ENCODE measurements at regions of chr5 and their contacts with region 1.

Region 1: GRCh38 chr5:99169309-99169708 is 240.5 kb upstream of the CHD1 start:
- DNase-seq: no peak
- H3K4me3 ChIP-seq: no peak overlapping the region
- H3K27ac ChIP-seq: no peak overlapping the region
- H3K4me1 ChIP-seq: no peaks in the 10 kb centered on the region
- H3K27me3 ChIP-seq: no peaks in the 10 kb centered on the region
- CTCF ChIP-seq: peak in 1 of 3 experiments; percentile 19

Region 2: GRCh38 chr5:99272576-99272975 is 103.3 kb after region 1 on chr5:
- dilution Hi-C with region 1: loop called (anchors 25 kb)
- DNase-seq: no peak
- H3K4me3 ChIP-seq: no peak overlapping the region
- H3K27ac ChIP-seq: no peak overlapping the region
- H3K4me1 ChIP-seq: no peaks in the 10 kb centered on the region
- H3K27me3 ChIP-seq: no peaks in the 10 kb centered on the region
- CTCF ChIP-seq: no peak